ENCODE measurements at regions of chr22 and their contacts with region 1.

Region 1: GRCh38 chr22:43346521-43346929 is 3.4 kb upstream of the SCUBE1 start:
- DNase-seq: peak; percentile 44
- ATAC-seq: peak; percentile 45
- H3K4me3 Mint-ChIP-seq: no peak overlapping the region
- H3K27ac Mint-ChIP-seq: no peak overlapping the region
- H3K4me1 Mint-ChIP-seq: peaks cover 11% of the 10 kb centered on the region
- H3K27me3 Mint-ChIP-seq: peaks cover 42% of the 10 kb centered on the region
- CTCF ChIP-seq: no peak

Region 2: DNA sequence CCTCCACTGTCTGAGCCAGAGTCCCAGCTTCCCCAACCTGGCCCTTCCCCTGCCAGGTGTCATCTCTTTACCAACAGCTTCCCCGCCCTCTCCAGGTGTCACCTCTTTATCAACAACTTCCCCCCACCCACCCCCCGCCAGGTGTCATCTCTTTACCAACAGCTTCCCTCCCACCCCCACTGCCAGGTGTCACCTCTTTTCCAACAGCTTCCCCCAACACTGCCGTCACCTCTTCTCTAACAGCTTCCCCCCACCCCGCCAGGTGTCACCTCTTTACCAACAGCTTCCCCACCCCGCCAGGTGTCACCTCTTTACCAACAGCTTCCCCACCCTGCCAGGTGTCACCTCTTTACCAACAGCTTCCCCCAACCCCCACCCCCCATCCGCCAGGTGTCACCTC is 129.8 kb before region 1 on chr22:
- CTCF ChIA-PET with region 1: no interaction called
- POLR2A ChIA-PET with region 1: no interaction called
- intact Hi-C with region 1: no loop called
- DNase-seq: no peak
- ATAC-seq: no peak
- H3K4me3 Mint-ChIP-seq: no peak overlapping the region
- H3K27ac Mint-ChIP-seq: no peak overlapping the region
- H3K4me1 Mint-ChIP-seq: no peaks in the 10 kb centered on the region
- H3K27me3 Mint-ChIP-seq: peaks cover 12% of the 10 kb centered on the region
- CTCF ChIP-seq: no peak

Region 3: GRCh38 chr22:43230971-43231723 is 115.4 kb before region 1 on chr22:
- CTCF ChIA-PET with region 1: interaction called, 45 read pairs
- POLR2A ChIA-PET with region 1: interaction called, 4 read pairs
- intact Hi-C with region 1: loop called (anchors 1 kb)
- DNase-seq: peak; percentile 53
- ATAC-seq: peak; percentile 68
- H3K4me3 Mint-ChIP-seq: no peak overlapping the region
- H3K27ac Mint-ChIP-seq: no peak overlapping the region
- H3K4me1 Mint-ChIP-seq: peaks cover 5% of the 10 kb centered on the region
- H3K27me3 Mint-ChIP-seq: peaks cover 7% of the 10 kb centered on the region
- CTCF ChIP-seq: peak; percentile 93

Region 4: GRCh38 chr22:43273902-43274484 is 72.5 kb before region 1 on chr22:
- CTCF ChIA-PET with region 1: interaction called, 17 read pairs
- POLR2A ChIA-PET with region 1: no interaction called
- intact Hi-C with region 1: loop called (anchors 1 kb)
- DNase-seq: no peak
- ATAC-seq: no peak
- H3K4me3 Mint-ChIP-seq: no peak overlapping the region
- H3K27ac Mint-ChIP-seq: no peak overlapping the region
- H3K4me1 Mint-ChIP-seq: no peaks in the 10 kb centered on the region
- H3K27me3 Mint-ChIP-seq: peaks cover 7% of the 10 kb centered on the region
- CTCF ChIP-seq: no peak

Measured in activated B cell treated with CpG ODN at 0.5 μM for 24 hours (primary cell).